Activated naive CD4-positive, alpha-beta T cell treated with anti-CD3 and anti-CD28 coated beads, Interleukin-2, amount 10 ng/mL, durations not matched to agents 7 days and 5 days (primary cell): ENCODE measurements at regions of chr10 and their contacts with region 1.

Region 1: DNA sequence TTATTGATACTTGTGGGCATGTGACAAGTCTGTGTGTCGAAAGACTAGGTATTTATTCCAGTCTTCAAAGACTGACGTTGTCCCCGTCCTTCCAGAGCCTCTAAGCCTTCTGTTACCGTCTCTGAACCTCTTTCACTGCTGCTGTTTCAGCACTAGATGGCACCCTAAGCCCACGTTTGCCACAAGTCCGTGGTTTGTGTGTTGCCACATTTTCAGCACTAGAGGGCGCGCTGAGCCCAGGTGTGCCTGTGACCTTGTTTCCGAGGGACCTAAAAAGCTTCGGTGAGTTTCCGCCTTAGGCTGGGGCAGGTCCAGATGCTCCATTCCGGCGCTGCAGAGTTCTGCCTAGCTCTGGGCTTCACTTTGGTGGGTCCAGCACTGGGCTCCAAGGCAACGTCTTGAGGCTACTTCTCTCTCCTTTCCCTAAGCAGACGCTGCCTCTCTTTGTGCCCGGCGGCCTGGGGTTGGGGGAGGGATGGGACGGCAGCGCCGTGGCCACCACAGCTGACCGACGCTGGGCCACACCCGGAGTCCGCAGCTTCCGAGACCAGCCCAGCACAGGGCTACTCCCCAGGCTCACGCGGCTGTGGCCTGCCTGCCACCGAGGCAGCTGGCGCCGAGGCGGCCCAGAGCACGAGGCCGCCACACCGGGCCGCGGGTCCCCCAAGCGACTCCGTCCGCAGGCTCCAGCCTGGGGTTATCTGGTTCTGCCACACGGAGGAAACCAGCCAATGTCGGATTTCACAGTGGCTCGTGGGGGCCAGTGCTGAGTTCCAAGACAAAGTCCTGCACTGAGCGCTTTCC is 520.2 kb downstream of the REEP3 start:
- DNase-seq: peak; percentile 88
- H3K4me3 Mint-ChIP-seq: peak overlapping the region; percentile 36
- H3K27ac Mint-ChIP-seq: no peak overlapping the region
- H3K4me1 Mint-ChIP-seq: peaks cover 5% of the 10 kb centered on the region
- H3K27me3 Mint-ChIP-seq: peaks cover 4% of the 10 kb centered on the region

Region 2: GRCh38 chr10:64014281-64014680 is 27.1 kb before region 1 on chr10:
- CTCF ChIA-PET with region 1: no interaction called
- DNase-seq: no peak
- H3K4me3 Mint-ChIP-seq: no peak overlapping the region
- H3K27ac Mint-ChIP-seq: no peak overlapping the region
- H3K4me1 Mint-ChIP-seq: no peaks in the 10 kb centered on the region
- H3K27me3 Mint-ChIP-seq: no peaks in the 10 kb centered on the region

Region 3: GRCh38 chr10:64054392-64054791 is 13.0 kb after region 1 on chr10:
- CTCF ChIA-PET with region 1: interaction called, 12 read pairs
- DNase-seq: no peak
- H3K4me3 Mint-ChIP-seq: no peak overlapping the region
- H3K27ac Mint-ChIP-seq: no peak overlapping the region
- H3K4me1 Mint-ChIP-seq: no peaks in the 10 kb centered on the region
- H3K27me3 Mint-ChIP-seq: peaks cover 3% of the 10 kb centered on the region